Activated naive CD4-positive, alpha-beta T cell treated with anti-CD3 and anti-CD28 coated beads, Interleukin-2, amount 10 ng/mL, durations not matched to agents 7 days and 5 days (primary cell): ENCODE measurements at regions of chr3 and their contacts with region 1.

Region 1: DNA sequence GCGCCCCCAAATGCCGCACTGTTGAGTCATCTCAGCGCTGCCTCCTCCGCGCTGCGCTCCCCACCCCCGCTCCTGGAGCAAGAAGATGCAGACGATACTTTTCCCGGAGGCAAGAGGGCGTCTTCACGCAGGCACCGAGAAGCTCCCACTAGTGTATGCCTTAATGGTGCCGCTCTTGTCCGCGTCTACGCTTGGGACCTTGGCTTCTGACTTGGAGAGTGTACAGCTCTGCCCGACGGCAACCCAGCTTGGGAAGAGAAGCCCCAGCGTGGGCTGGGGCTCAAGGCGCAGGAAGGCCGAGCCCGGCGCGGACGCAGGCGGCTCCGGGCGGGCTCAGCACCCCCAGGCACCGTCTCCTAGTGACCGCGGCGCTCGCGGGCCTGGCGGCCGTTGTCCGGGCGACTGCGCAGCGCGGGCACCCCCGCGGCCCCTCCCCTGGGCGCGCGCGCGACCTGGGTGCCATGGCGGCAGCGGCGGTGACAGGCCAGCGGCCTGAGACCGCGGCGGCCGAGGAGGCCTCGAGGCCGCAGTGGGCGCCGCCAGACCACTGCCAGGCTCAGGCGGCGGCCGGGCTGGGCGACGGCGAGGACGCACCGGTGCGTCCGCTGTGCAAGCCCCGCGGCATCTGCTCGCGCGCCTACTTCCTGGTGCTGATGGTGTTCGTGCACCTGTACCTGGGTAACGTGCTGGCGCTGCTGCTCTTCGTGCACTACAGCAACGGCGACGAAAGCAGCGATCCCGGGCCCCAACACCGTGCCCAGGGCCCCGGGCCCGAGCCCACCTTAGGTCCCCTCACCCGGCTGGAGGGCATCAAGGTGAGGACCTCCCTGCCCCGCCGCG is at the start of gene P4HTM:
- DNase-seq: peak; percentile 78
- H3K4me3 Mint-ChIP-seq: peak within 1 kb of the TSS; percentile 92
- H3K27ac Mint-ChIP-seq: peak within 1 kb of the TSS; percentile 94
- H3K4me1 Mint-ChIP-seq: peaks cover 59% of the 10 kb centered on the region
- H3K27me3 Mint-ChIP-seq: no peaks in the 10 kb centered on the region

Region 2: DNA sequence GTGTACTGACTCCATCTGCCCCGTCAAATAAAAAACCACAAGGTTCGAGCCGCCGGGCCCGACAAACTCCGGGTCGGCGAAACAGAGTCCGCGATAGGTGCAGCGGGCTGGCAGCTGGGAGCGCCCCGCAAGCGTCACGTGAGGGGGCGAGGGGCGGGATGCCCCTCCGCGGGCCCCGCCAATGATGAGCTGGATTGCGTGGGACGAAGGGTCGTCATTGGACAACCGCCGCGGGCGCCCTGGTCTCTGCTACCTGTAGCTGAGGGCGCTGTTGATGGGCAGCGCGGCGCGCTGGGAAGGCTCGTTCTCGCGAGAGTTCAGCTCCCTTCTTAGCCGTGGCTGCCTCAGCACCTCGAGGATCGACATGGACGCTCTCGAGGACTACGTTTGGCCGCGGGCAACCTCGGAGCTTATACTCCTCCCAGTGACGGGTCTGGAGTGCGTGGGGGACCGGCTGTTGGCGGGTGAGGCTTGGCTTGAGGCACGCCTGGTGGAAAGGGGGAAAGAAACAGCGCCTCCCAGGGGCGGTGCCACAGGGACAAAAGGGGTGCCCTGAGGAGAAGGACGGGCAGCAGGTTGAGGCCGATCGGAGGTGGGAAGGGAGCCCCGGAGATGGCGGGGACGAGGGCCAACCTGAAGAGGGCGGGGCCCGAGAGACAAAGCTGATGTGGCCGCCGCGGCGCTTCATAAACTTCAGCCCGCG is 17.2 kb after region 1 on chr3 and contains the start of gene WDR6:
- CTCF ChIA-PET with region 1: interaction called, 46 read pairs
- DNase-seq: peak; percentile 99
- H3K4me3 Mint-ChIP-seq: peak within 1 kb of the TSS; percentile 98
- H3K27ac Mint-ChIP-seq: peak within 1 kb of the TSS; percentile 99
- H3K4me1 Mint-ChIP-seq: peaks cover 38% of the 10 kb centered on the region
- H3K27me3 Mint-ChIP-seq: no peaks in the 10 kb centered on the region

Region 3: GRCh38 chr3:49013755-49014628 is 24.0 kb after region 1 on chr3:
- CTCF ChIA-PET with region 1: interaction called, 46 read pairs
- DNase-seq: peak; percentile 70
- H3K4me3 Mint-ChIP-seq: no peak overlapping the region
- H3K27ac Mint-ChIP-seq: no peak overlapping the region
- H3K4me1 Mint-ChIP-seq: peaks cover 30% of the 10 kb centered on the region
- H3K27me3 Mint-ChIP-seq: no peaks in the 10 kb centered on the region

Region 4: GRCh38 chr3:49021813-49022687 is 32.0 kb after region 1 on chr3 and contains the start of gene NDUFAF3:
- CTCF ChIA-PET with region 1: interaction called, 29 read pairs
- DNase-seq: peak; percentile 94
- H3K4me3 Mint-ChIP-seq: peak within 1 kb of the TSS; percentile 90
- H3K27ac Mint-ChIP-seq: peak within 1 kb of the TSS; percentile 99
- H3K4me1 Mint-ChIP-seq: peaks cover 60% of the 10 kb centered on the region
- H3K27me3 Mint-ChIP-seq: no peaks in the 10 kb centered on the region

Region 5: DNA sequence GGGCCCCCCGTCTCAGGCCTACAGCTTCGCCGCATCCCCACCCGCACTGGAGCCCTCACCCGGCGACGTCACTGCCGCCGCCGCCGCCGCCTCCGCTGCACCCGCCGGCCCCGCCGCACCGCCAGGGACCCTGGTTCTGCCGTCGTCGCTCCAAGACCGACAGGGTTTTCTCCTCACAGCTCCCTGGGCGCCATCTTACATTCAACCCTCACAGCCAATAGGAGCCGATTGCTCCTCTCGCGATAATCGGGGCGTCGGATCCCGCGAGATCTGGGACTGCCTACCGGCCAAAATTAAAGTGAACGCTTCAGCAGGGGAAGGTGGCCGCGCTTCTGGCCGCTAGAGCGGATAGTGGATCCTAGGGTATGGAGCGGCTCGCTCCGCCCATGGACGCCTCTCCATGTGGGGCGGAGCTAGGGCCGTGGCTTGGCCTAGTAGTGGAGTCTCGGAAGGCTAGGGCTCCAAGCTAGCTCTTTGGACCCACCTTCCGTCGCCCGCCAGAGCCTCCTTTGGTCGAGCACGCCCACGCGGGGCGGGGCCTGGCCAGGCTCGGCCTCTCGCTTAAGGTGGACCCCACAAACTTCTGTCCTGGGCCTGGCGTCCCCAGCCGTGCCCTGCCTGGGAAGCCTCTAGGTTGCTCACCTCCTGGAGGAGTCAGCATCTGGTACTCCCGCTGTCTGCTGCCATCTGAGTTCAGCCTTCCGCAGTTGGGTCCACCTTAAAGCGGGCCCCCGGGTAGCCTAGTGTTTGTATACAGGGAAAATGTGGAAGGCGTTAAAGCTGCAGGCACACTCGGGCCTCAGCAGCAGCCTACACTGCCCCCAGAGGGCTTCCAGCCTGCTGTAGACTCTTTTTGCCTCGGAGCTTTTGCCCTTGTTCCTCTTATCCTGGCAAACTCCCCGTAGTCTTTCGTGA is 104.1 kb after region 1 on chr3 and contains the start of gene QRICH1:
- CTCF ChIA-PET with region 1: interaction called, 26 read pairs
- DNase-seq: peak; percentile 98
- H3K4me3 Mint-ChIP-seq: peak within 1 kb of the TSS; percentile 88
- H3K27ac Mint-ChIP-seq: peak within 1 kb of the TSS; percentile 97
- H3K4me1 Mint-ChIP-seq: peaks cover 42% of the 10 kb centered on the region
- H3K27me3 Mint-ChIP-seq: no peaks in the 10 kb centered on the region

Region 6: DNA sequence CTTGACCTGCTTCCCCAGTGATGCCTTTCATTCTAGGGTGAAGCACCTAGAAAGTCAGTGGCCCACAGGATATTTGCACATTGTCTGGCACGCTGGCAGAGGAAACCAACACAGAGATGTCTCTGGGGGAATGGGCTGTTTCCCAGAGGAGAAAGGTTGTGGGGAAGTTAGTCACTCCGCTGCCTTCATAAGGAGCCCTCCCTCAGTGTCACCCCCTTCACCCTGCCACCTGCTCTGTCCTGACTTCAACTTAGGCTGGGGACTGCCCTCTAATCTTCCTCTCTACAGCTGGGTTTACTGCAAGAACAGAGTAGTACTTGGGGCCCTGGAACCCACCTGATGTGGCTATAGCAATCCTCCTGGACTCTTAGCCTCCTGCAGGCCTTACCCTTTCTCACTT is 187.1 kb after region 1 on chr3:
- CTCF ChIA-PET with region 1: no interaction called
- DNase-seq: no peak
- H3K4me3 Mint-ChIP-seq: no peak overlapping the region
- H3K27ac Mint-ChIP-seq: no peak overlapping the region
- H3K4me1 Mint-ChIP-seq: peaks cover 2% of the 10 kb centered on the region
- H3K27me3 Mint-ChIP-seq: peaks cover 33% of the 10 kb centered on the region

Region 7: GRCh38 chr3:49213541-49213943 is 223.5 kb after region 1 on chr3:
- CTCF ChIA-PET with region 1: no interaction called
- DNase-seq: no peak
- H3K4me3 Mint-ChIP-seq: no peak overlapping the region
- H3K27ac Mint-ChIP-seq: no peak overlapping the region
- H3K4me1 Mint-ChIP-seq: no peaks in the 10 kb centered on the region
- H3K27me3 Mint-ChIP-seq: peaks cover 10% of the 10 kb centered on the region